H1 (cell line): ENCODE measurements at regions of chr19 and their contacts with region 1.

Region 1: GRCh38 chr19:44770550-44771257 is 7.0 kb upstream of the CBLC start:
- DNase-seq: peak; percentile 90 to 99
- H3K4me3 ChIP-seq: no peak overlapping the region
- H3K27ac ChIP-seq: no peak overlapping the region
- H3K4me1 ChIP-seq: peaks cover 0 to 2% (median under 1%) of the 10 kb centered on the region in 4 experiments; a peak in 2 of 7 replicates
- H3K27me3 ChIP-seq: no peaks in the 10 kb centered on the region; a peak in 2 of 7 replicates
- CTCF ChIP-seq: peak; percentile 56 to 85 (median 76)
- EP300 ChIP-seq: no peak
- POLR2A ChIP-seq: no peak
- RAD21 ChIP-seq: peak; percentile 93 to 96

Region 2: DNA sequence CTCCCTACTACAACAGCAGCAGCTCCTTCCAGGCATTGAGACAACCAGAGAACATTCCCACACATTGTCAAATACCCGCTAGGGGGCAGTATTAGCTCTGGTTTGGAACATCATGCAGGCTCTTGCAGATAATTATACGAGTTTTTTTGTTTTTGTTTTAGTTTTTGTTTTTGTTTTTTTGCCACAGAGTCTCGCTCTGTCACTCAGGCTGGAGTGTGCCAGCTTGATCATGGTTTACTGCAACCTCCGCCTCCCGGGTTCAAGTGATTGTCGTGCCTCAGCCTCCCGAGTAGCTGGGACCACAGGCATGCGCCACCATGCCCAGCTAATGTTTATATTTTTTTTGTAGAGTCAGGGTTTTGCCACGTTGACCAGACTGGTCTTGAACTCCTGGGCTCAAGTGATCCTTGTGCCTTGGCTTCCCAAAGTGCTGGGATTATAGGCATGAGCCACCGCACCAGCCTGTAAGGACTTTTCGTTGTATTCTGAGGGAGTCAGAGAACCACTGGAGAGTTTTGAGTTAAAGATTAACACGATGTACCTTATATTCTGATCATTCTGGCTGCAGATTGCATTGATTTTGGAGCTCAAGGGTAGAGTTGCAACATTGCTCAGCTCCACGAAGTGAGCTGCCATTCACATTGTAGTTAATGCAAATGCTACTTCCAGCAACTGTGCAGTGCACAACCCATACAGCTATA is 199.6 kb before region 1 on chr19:
- CTCF ChIA-PET with region 1: interaction called, 16 read pairs
- POLR2A ChIA-PET with region 1: no interaction called
- DNase-seq: peak in 1 of 2 experiments; percentile 80
- H3K4me3 ChIP-seq: no peak overlapping the region
- H3K27ac ChIP-seq: no peak overlapping the region
- H3K4me1 ChIP-seq: no peaks in the 10 kb centered on the region
- H3K27me3 ChIP-seq: no peaks in the 10 kb centered on the region
- CTCF ChIP-seq: peak in 2 of 3 experiments; percentile 62 to 82; a peak in 3 of 4 replicates
- EP300 ChIP-seq: no peak
- POLR2A ChIP-seq: no peak
- RAD21 ChIP-seq: peak; percentile 80 to 89

Region 3: DNA sequence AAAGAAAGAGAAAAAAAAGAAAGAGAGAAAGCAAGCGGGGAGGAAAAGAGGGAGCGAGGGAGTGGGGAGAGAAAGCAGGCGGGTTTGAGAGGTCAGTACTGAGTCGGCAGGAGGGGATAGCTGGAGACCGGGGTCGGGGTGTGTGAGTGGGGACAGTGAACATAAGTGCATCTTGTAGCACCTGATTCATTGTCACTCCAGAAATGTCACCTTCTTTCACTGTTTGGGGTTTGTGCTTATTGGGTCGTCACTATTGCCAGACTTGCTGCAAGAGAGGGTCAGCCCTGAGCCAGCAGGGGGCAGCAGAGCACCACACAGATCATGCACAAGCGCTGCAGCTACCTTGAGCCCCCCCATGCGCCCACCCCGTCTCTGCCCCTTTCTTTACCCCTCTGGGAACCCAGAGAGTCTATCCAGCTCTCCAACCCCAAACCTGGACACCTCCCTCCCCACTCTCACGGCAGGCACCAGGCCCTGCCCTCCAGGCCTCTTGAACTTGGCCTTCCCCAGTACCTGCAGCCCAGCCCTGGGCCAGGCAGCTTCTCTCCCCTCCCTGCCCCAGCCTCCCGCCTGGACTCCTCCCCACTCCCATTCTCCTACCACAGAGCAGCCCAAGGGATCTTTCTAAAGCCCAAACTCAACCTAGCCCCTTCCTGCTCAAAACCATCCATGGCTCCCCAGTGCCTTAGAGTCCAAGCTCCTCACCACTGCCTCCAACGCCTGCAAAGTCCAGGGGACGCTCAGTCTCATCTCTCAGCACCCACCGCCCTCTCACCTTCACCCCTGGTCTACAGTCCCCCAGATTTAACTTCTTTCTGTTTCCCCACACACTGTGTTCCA is 81.4 kb before region 1 on chr19:
- CTCF ChIA-PET with region 1: interaction called, 112 read pairs
- POLR2A ChIA-PET with region 1: interaction called, 5 read pairs
- DNase-seq: peak; percentile 65 to 96
- H3K4me3 ChIP-seq: peak overlapping the region in 1 of 4 experiments; percentile 34; a peak in 1 of 8 replicates
- H3K27ac ChIP-seq: no peak overlapping the region
- H3K4me1 ChIP-seq: peaks cover 0 to 12% (median 2%) of the 10 kb centered on the region in 4 experiments; a peak in 4 of 7 replicates
- H3K27me3 ChIP-seq: no peaks in the 10 kb centered on the region
- CTCF ChIP-seq: peak; percentile 92 to 94 (median 93)
- EP300 ChIP-seq: no peak
- POLR2A ChIP-seq: no peak
- RAD21 ChIP-seq: peak; percentile 90 to 91

Region 4: GRCh38 chr19:44741841-44742352 is 28.8 kb before region 1 on chr19:
- CTCF ChIA-PET with region 1: interaction called, 56 read pairs
- POLR2A ChIA-PET with region 1: interaction called, 5 read pairs
- DNase-seq: no peak
- H3K4me3 ChIP-seq: no peak overlapping the region
- H3K27ac ChIP-seq: no peak overlapping the region
- H3K4me1 ChIP-seq: peaks cover 0 to 4% (median 2%) of the 10 kb centered on the region in 4 experiments; a peak in 4 of 7 replicates
- H3K27me3 ChIP-seq: peaks cover 6 to 20% (median 15%) of the 10 kb centered on the region in 4 experiments
- CTCF ChIP-seq: no peak
- EP300 ChIP-seq: no peak
- POLR2A ChIP-seq: no peak
- RAD21 ChIP-seq: no peak

Region 5: DNA sequence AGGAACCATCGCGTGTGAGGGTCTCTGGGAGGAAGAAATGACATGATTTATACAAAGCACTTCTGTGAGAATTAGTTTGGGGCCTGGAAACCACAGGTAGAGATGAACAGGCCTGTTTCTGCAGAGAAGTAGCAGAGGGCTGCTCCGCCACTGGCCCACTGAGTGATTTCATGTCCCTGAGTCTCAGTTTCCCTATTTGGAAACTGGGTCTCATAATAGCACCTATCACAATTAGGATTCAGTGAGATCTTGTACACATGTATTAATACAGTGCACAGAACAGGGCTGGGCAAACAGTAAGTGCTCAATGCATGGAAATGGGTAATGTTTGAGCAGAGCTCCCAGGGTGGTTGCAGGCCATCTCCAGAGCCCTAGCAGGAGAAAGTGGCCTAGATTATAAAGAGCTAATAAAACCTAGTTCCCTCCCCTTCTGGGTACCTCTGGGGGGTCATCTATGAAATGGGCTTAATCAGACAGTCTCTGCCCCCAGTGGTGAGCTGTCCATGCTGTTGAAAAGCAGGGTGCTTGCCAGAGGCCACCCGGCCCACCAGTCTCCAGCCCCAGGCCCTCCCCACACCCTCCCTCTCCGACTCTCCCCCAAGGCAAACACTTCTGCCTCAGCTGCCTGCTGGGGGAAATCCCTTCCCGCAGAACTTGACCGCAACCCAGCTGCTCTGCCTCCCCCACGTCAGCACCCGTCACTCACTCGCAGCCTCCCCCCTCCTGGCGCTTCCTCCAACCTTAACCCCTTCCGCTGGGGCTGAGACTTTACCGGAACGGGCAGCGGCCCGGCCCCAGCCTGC is 17.7 kb before region 1 on chr19:
- CTCF ChIA-PET with region 1: interaction called, 21 read pairs
- POLR2A ChIA-PET with region 1: interaction called, 7 read pairs
- DNase-seq: peak in 1 of 2 experiments; percentile 70
- H3K4me3 ChIP-seq: peak overlapping the region in 2 of 4 experiments; percentile 16 to 66; a peak in 4 of 8 replicates
- H3K27ac ChIP-seq: no peak overlapping the region
- H3K4me1 ChIP-seq: peaks cover 11 to 38% (median 15%) of the 10 kb centered on the region in 4 experiments
- H3K27me3 ChIP-seq: peaks cover 36 to 86% (median 71%) of the 10 kb centered on the region in 4 experiments
- CTCF ChIP-seq: no peak
- EP300 ChIP-seq: no peak
- POLR2A ChIP-seq: no peak
- RAD21 ChIP-seq: no peak

Region 6: GRCh38 chr19:44808463-44809371 is 38.0 kb after region 1 on chr19 and contains the start of gene BCAM:
- CTCF ChIA-PET with region 1: interaction called, 64 read pairs
- POLR2A ChIA-PET with region 1: interaction called, 12 read pairs
- DNase-seq: peak in 1 of 2 experiments; percentile 87
- H3K4me3 ChIP-seq: peak within 1 kb of the TSS; percentile 64 to 96 (median 70)
- H3K27ac ChIP-seq: peak within 1 kb of the TSS; percentile 91
- H3K4me1 ChIP-seq: peaks cover 4 to 34% (median 21%) of the 10 kb centered on the region in 4 experiments
- H3K27me3 ChIP-seq: peaks cover 0 to 13% (median 11%) of the 10 kb centered on the region in 4 experiments; a peak in 6 of 7 replicates
- CTCF ChIP-seq: no peak
- EP300 ChIP-seq: no peak
- POLR2A ChIP-seq: peak in 1 of 2 experiments; percentile 50; a peak in 2 of 3 replicates
- RAD21 ChIP-seq: no peak
- total RNA-seq, gene BCAM: 81.4 and 83.0 TPM in 2 replicates